Ovary (tissue), 10 donors: ENCODE measurements at regions of chr2 and their contacts with region 1.

Region 1: GRCh38 chr2:234278556-234279255 is 218.2 kb downstream of the ARL4C start:
- DNase-seq: no peak
- H3K4me3 ChIP-seq: no peak overlapping the region
- H3K27ac ChIP-seq: no peak overlapping the region
- H3K4me1 ChIP-seq: no peaks in the 10 kb centered on the region
- H3K27me3 ChIP-seq: no peaks in the 10 kb centered on the region
- CTCF ChIP-seq: no peak
- EP300 ChIP-seq: no peak
- POLR2A ChIP-seq: no peak

Region 2: DNA sequence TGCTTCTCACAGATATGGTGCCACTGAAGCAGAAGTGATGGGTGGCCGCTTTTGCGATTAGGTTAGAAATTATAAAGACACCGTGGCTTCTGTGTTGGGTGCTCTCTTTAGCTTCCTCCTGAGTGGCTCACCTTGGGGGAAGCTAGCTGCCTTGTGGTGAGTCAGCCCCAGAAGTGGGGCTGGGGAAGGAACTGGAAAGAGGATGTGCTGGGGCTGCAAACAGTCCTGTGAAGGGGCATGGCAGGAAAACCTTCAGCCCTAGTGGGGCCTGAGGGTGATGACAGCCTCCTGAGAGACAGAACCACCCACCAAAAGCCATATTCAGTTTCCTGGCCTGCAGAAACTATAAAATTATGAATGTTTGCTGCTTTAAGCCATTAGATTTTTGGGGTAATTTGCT is 1994.4 kb after region 1 on chr2:
- intact Hi-C with region 1: loop called in 1 of 4 experiments (anchors 5 kb)
- DNase-seq: no peak
- H3K4me3 ChIP-seq: no peak overlapping the region
- H3K27ac ChIP-seq: no peak overlapping the region
- H3K4me1 ChIP-seq: no peaks in the 10 kb centered on the region
- H3K27me3 ChIP-seq: no peaks in the 10 kb centered on the region
- CTCF ChIP-seq: no peak
- EP300 ChIP-seq: no peak
- POLR2A ChIP-seq: no peak